ENCODE measurements at regions of chr19 and their contacts with region 1.

Region 1: DNA sequence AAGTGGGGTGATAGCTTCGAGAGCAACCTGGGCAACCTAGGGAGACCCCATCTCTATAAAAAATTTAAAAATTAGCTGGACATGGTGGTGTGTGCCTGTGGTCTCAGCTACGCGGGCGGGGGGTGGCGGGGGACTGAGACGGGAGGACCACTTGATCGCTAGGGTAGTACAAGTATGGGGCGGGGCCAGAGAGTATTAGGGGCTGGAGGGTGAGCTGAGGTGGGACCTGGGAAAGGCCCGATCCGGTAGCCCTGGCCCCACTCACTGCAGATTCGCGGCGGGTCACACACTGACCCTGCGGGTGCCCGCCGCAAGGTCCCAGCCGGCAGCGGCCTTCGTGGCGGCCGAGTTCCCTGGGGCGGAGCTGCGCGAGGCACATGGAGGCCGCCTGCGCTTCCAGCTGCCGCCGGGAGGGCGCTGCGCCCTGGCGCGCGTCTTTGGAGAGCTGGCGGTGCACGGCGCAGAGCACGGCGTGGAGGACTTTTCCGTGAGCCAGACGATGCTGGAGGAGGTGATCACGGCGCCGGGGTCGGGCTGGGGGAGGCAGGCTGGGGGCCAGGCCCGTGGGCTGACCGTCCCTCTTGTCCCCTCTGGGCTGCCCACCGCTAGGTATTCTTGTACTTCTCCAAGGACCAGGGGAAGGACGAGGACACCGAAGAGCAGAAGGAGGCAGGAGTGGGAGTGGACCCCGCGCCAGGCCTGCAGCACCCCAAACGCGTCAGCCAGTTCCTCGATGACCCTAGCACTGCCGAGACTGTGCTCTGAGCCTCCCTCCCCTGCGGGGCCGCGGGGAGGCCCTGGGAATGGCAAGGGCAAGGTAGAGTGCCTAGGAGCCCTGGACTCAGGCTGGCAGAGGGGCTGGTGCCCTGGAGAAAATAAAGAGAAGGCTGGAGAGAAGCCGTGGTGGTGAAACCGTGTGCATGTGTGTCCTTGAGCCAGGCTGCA is 2.0 kb upstream of the ARHGAP45 start:
- DNase-seq: peak; percentile 80
- H3K4me3 Mint-ChIP-seq: peak overlapping the region; percentile 5
- H3K27ac Mint-ChIP-seq: no peak overlapping the region
- H3K4me1 Mint-ChIP-seq: peaks cover 24% of the 10 kb centered on the region
- H3K27me3 Mint-ChIP-seq: no peaks in the 10 kb centered on the region

Region 2: GRCh38 chr19:1039646-1040475 is 25.1 kb before region 1 on chr19 and contains the start of gene ABCA7:
- CTCF ChIA-PET with region 1: interaction called, 31 read pairs
- POLR2A ChIA-PET with region 1: interaction called, 9 read pairs
- intact Hi-C with region 1: loop called (anchors 2 kb)
- DNase-seq: peak; percentile 99
- H3K4me3 Mint-ChIP-seq: peak within 1 kb of the TSS; percentile 84
- H3K27ac Mint-ChIP-seq: peak within 1 kb of the TSS; percentile 82
- H3K4me1 Mint-ChIP-seq: peaks cover 41% of the 10 kb centered on the region
- H3K27me3 Mint-ChIP-seq: no peaks in the 10 kb centered on the region
- total RNA-seq, gene ABCA7: 28.3 to 29.3 TPM

Region 3: DNA sequence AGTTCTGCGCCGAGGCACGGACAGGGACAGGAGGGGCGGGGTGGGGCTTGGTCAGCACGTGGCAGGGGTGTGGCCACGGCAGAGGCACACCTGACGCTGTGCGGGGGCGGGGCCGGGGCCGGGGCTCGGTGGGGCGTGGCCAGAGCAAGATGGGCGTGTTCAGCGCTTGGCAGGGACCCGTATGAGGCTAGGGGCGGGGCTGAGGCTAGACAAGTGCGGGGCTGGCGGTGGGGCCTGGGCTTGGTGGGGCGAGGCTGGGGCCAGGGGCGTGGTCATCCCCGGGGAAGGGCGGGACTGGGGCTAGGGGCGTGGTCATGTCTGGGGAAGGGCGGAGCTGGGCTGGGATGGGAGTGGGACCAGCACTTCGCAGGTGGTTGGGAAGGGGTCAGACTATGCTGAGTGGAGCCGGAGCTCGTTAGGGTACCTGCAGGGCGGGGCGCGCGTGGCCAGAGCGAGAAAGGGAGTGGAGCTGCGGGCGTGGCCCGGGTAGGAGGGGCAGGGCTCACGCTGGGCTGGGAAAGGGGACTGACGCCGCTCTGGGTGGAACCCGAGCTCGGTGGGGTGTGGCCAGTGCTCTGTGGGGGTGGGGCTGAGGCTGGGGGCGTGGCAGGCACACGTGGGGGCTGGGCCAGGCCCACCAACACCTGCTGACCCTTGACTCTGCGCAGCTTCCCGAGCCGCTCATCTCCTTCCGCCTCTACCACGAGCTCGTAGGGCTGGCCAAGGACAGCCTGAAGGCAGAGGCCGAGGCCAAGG is 17.4 kb after region 1 on chr19:
- CTCF ChIA-PET with region 1: interaction called, 41 read pairs
- POLR2A ChIA-PET with region 1: interaction called, 55 read pairs
- intact Hi-C with region 1: loop called (anchors 1 kb)
- DNase-seq: peak; percentile 92
- H3K4me3 Mint-ChIP-seq: no peak overlapping the region
- H3K27ac Mint-ChIP-seq: no peak overlapping the region
- H3K4me1 Mint-ChIP-seq: peaks cover 54% of the 10 kb centered on the region
- H3K27me3 Mint-ChIP-seq: no peaks in the 10 kb centered on the region

Region 4: GRCh38 chr19:1087813-1088415 is 23.0 kb after region 1 on chr19:
- CTCF ChIA-PET with region 1: interaction called, 41 read pairs
- POLR2A ChIA-PET with region 1: interaction called, 55 read pairs
- intact Hi-C with region 1: no loop called
- DNase-seq: peak; percentile 51
- H3K4me3 Mint-ChIP-seq: peak overlapping the region; percentile 13
- H3K27ac Mint-ChIP-seq: peak overlapping the region; percentile 81
- H3K4me1 Mint-ChIP-seq: peaks cover 45% of the 10 kb centered on the region
- H3K27me3 Mint-ChIP-seq: no peaks in the 10 kb centered on the region

Region 5: DNA sequence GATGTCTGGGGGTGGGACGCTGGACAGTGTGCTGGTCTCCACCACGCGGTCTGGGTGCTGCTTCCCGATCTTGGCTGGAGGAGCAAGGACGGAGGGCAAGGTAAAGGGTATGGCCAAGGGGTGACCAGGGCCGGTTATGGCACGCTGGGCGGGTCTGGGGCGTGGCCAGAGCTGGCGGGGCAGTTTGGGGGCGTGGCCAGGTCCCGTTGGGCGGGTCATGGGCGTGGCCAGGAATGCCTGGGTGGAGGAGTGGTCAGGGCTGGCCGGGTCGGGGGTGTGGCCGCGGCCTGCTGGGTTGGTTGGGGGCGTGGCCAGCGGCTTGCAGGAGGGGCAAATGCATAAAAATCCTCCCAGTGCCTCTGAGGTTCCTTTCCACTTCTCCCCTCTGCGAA is 58.0 kb after region 1 on chr19:
- CTCF ChIA-PET with region 1: no interaction called
- POLR2A ChIA-PET with region 1: no interaction called
- intact Hi-C with region 1: no loop called
- DNase-seq: peak; percentile 80
- H3K4me3 Mint-ChIP-seq: no peak overlapping the region
- H3K27ac Mint-ChIP-seq: peak overlapping the region; percentile 76
- H3K4me1 Mint-ChIP-seq: peaks cover 11% of the 10 kb centered on the region
- H3K27me3 Mint-ChIP-seq: no peaks in the 10 kb centered on the region

Measured in activated CD4-positive, alpha-beta memory T cell treated with anti-CD3 and anti-CD28 coated beads for 36 hours (primary cell).